ENCODE measurements at regions of chr15 and their contacts with region 1.

Region 1: GRCh38 chr15:85073556-85074194 is 92.0 kb downstream of the PDE8A start:
- DNase-seq: no peak
- H3K4me3 Mint-ChIP-seq: no peak overlapping the region
- H3K27ac Mint-ChIP-seq: peak overlapping the region; percentile 87
- H3K4me1 Mint-ChIP-seq: peaks cover 13% of the 10 kb centered on the region
- H3K27me3 Mint-ChIP-seq: no peaks in the 10 kb centered on the region

Region 2: GRCh38 chr15:84992157-84992944 is 81.3 kb before region 1 on chr15:
- intact Hi-C with region 1: loop called (anchors 1 kb)
- DNase-seq: no peak
- H3K4me3 Mint-ChIP-seq: peak overlapping the region; percentile 40
- H3K27ac Mint-ChIP-seq: peak overlapping the region; percentile 54
- H3K4me1 Mint-ChIP-seq: peaks cover 44% of the 10 kb centered on the region
- H3K27me3 Mint-ChIP-seq: no peaks in the 10 kb centered on the region

Region 3: GRCh38 chr15:85097706-85098105 is 24.0 kb after region 1 on chr15:
- intact Hi-C with region 1: loop called (anchors 2 kb)
- DNase-seq: no peak
- H3K4me3 Mint-ChIP-seq: no peak overlapping the region
- H3K27ac Mint-ChIP-seq: no peak overlapping the region
- H3K4me1 Mint-ChIP-seq: no peaks in the 10 kb centered on the region
- H3K27me3 Mint-ChIP-seq: no peaks in the 10 kb centered on the region

Region 4: GRCh38 chr15:86101818-86102217 is 1028.1 kb after region 1 on chr15:
- intact Hi-C with region 1: no loop called
- DNase-seq: no peak
- H3K4me3 Mint-ChIP-seq: no peak overlapping the region
- H3K27ac Mint-ChIP-seq: no peak overlapping the region
- H3K4me1 Mint-ChIP-seq: no peaks in the 10 kb centered on the region
- H3K27me3 Mint-ChIP-seq: peaks cover 14% of the 10 kb centered on the region